Naive thymus-derived CD4-positive, alpha-beta T cell (primary cell): ENCODE measurements at regions of chr1 and their contacts with region 1.

Region 1: GRCh38 chr1:32992489-32993323 is 28.1 kb upstream of the RNF19B start:
- DNase-seq: peak in 1 of 9 donors; percentile 77
- ATAC-seq: peak; percentile 91
- H3K4me3 ChIP-seq: no peak overlapping the region
- H3K4me3 Mint-ChIP-seq: peak overlapping the region in 1 of 10 donors; percentile 73
- H3K27ac ChIP-seq: no peak overlapping the region
- H3K27ac Mint-ChIP-seq: peak overlapping the region in 6 of 9 donors; percentile 8 to 94 (median 34)
- H3K4me1 ChIP-seq: peaks cover 0 to 3% of the 10 kb centered on the region in 2 donors
- H3K4me1 Mint-ChIP-seq: peaks cover 5 to 74% (median 7%) of the 10 kb centered on the region in 7 donors
- H3K27me3 ChIP-seq: no peaks in the 10 kb centered on the region
- H3K27me3 Mint-ChIP-seq: no peaks in the 10 kb centered on the region

Region 2: DNA sequence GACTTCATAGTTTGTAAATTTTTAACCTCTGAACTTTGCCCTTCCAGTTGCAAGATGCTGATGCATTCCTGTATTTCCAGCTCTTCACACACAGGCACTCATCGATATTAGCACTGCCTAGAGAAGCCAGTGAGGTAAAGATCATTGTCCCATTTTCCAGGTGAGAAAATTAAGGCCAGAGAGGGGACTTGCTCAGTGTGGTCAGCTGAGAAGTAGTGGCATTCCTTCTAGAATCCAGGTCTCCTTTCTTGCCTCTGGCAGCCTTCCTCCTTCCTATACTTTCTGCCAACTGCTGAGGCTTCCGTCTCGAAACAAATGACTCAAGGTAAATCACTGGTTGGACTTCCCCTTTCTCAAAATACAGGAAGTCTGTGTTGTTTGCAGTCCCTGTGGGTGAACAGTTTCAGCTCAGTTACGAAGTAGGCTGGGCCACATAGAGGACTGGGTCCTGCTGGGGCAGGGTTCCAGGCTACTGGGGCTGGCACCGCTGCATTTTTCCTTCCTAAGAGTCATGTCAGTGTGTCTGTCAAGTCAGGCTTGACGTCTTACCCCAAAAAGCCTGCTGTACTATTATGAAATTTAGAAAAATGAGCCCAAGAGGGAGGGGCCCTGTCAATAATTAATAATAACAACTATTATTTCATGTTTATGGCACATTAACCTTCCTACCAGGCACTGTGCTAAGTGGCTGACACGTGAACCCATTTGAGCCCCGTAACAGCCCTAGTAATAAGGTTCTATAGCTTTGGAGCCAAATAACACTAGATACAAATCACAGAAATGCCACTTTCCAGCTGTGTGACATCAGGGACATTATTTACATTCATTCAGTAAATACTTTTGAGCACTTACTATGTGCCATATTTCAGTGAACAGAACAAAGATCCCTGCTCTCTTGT is 11.5 kb before region 1 on chr1:
- CTCF ChIA-PET with region 1: no interaction called
- POLR2A ChIA-PET with region 1: interaction called, 6 read pairs
- intact Hi-C with region 1: loop called in 1 of 2 experiments (anchors 1 kb)
- DNase-seq: peak in 8 of 9 donors; percentile 51 to 73 (median 63)
- ATAC-seq: peak; percentile 95
- H3K4me3 ChIP-seq: peak overlapping the region; percentile 49
- H3K4me3 Mint-ChIP-seq: peak overlapping the region; percentile 65 to 93 (median 82)
- H3K27ac ChIP-seq: peak overlapping the region; percentile 84
- H3K27ac Mint-ChIP-seq: peak overlapping the region; percentile 91 to 99 (median 94)
- H3K4me1 ChIP-seq: peaks cover 11 to 26% of the 10 kb centered on the region in 2 donors
- H3K4me1 Mint-ChIP-seq: peaks cover 12 to 74% (median 26%) of the 10 kb centered on the region in 7 donors
- H3K27me3 ChIP-seq: no peaks in the 10 kb centered on the region
- H3K27me3 Mint-ChIP-seq: no peaks in the 10 kb centered on the region